ENCODE measurements at regions of chr1 and their contacts with region 1.

Region 1: GRCh38 chr1:47948126-47948525 is 49.1 kb downstream of the TRABD2B start:
- DNase-seq: peak in 1 of 10 donors; percentile 48
- H3K4me3 ChIP-seq: no peak overlapping the region
- H3K27ac ChIP-seq: no peak overlapping the region
- H3K27me3 ChIP-seq: no peaks in the 10 kb centered on the region
- CTCF ChIP-seq: peak in 32 of 56 donors; percentile 15 to 68 (median 42)

Region 2: DNA sequence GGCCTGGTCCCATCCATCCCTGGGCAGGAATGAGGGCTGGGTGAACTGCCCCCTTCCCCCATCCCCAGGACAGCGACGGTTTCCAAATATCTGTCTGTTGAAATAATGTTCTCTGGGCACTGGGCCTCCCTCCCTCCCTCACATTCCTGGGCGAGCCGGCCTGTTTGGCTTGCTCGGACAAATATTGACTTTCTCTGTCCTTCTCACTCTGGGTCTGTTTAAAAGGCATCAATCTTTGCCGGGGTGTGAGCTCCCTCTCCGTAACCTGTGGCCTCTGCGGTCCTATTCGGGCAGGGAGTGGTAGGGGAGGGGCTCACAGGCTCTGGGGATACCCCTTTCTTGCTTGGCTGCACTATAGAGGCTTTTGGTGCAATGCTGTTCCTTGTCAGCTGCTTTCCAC is 470.0 kb before region 1 on chr1:
- intact Hi-C with region 1: no loop called
- DNase-seq: no peak
- H3K4me3 ChIP-seq: no peak overlapping the region
- H3K27ac ChIP-seq: peak overlapping the region in 1 of 59 donors; percentile 51
- H3K27me3 ChIP-seq: peaks cover 0 to 6% (median 0%) of the 10 kb centered on the region in 45 donors
- CTCF ChIP-seq: no peak

Region 3: DNA sequence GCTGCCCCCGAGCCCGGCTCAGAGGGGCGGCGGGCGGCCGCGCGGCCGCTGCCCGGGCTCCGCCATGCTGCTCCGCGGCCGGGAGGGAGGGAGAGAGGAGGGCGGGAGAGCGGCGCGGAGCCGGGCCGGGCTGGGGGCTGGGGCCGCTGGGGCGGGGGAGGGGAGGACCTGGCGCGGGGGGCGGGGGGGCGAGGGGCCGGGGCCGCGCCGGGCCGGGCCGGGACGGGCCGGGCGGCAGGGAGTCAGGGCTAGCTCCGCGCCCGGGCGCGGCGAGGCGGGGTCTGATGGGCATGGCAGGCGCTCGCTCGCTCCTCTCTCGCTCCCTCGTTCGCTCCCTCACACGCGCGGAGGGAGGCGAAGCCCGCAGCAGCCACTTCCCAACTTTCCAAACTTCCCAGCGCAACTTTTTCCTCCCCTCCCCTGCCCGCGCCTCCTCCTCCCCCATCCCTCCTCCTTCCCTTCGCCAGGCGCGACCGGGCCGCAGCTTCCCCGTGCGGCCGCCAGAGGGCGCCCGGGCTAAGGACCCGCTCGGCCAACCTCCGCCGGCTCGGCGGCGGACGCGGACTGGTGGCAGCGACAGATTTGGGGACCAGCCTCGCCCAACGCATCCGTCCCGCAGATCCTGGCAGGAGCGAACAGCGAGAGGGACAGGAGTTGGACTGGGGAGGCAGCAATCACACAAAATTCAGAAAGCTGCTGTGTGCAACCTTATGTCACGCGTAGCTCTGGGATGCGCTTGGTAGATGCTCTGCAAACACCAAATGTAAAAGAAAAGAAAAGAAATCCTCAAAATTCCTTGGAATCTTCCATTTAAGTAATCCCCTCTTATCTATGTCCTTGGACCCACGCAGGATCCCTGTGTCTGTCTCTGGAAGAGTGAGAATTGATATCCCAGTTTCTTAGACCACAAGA is 49.4 kb after region 1 on chr1 and contains the start of gene TRABD2B:
- intact Hi-C with region 1: loop called in 1 of 2 experiments (anchors 5 kb)
- DNase-seq: peak; percentile 62 to 90 (median 76)
- H3K4me3 ChIP-seq: peak within 1 kb of the TSS; percentile 19 to 72 (median 57)
- H3K27ac ChIP-seq: peak within 1 kb of the TSS in 9 of 59 donors; percentile 20 to 68 (median 47)
- H3K27me3 ChIP-seq: peaks cover 0 to 44% (median 13%) of the 10 kb centered on the region in 45 donors
- CTCF ChIP-seq: peak; percentile 61 to 99 (median 92)
- total RNA-seq, gene TRABD2B: 0.06 to 2.1 (median 0.31) TPM in 107 of 120 experiments, not detected in the others

Region 4: GRCh38 chr1:48109390-48110013 is 161.4 kb after region 1 on chr1:
- intact Hi-C with region 1: loop called in 1 of 2 experiments (anchors 2 kb)
- DNase-seq: peak in 1 of 10 donors; percentile 17
- H3K4me3 ChIP-seq: no peak overlapping the region
- H3K27ac ChIP-seq: no peak overlapping the region
- H3K27me3 ChIP-seq: peaks cover 0 to 7% (median 0%) of the 10 kb centered on the region in 45 donors
- CTCF ChIP-seq: peak; percentile 34 to 97 (median 83)

Region 5: DNA sequence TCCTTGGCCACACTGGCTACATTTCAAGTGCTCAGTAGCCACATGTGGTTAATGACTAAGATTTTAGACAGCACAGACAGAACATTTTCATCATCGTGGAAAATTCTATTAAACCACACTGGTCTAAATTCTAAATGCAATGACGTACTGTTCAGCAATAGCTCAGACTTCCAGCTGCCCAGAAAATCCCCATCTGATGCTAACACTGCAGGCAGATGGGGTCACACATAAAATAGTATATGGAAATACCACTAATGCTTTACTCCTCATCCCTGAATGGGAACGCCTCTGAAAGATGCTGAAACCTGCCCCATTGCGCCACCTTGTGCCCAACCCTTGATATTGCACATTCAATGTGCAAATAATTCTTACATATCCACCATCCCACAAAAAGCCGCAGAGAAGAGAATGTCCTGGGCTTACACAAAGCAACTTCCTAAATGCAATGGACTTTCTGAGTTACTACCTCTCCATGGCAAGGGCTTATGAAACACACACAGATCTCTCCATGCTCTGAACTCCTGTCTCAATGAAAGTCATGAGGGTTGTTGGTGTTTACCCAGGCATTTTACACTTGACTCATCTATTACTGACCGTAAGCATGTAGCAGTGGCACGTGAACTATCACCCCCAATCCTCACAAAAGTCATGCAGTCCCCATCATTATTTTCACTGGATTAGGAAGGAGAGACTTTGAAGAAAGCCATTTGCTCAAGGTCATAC is 254.1 kb after region 1 on chr1:
- intact Hi-C with region 1: loop called in 1 of 2 experiments (anchors 5 kb)
- DNase-seq: peak in 9 of 10 donors; percentile 52 to 84 (median 65)
- H3K4me3 ChIP-seq: no peak overlapping the region
- H3K27ac ChIP-seq: no peak overlapping the region
- H3K27me3 ChIP-seq: no peaks in the 10 kb centered on the region
- CTCF ChIP-seq: peak; percentile 74 to 96 (median 90)

Measured in dorsolateral prefrontal cortex (tissue), 120 donors.